ENCODE measurements at regions of chr14 and their contacts with region 1.

Region 1: DNA sequence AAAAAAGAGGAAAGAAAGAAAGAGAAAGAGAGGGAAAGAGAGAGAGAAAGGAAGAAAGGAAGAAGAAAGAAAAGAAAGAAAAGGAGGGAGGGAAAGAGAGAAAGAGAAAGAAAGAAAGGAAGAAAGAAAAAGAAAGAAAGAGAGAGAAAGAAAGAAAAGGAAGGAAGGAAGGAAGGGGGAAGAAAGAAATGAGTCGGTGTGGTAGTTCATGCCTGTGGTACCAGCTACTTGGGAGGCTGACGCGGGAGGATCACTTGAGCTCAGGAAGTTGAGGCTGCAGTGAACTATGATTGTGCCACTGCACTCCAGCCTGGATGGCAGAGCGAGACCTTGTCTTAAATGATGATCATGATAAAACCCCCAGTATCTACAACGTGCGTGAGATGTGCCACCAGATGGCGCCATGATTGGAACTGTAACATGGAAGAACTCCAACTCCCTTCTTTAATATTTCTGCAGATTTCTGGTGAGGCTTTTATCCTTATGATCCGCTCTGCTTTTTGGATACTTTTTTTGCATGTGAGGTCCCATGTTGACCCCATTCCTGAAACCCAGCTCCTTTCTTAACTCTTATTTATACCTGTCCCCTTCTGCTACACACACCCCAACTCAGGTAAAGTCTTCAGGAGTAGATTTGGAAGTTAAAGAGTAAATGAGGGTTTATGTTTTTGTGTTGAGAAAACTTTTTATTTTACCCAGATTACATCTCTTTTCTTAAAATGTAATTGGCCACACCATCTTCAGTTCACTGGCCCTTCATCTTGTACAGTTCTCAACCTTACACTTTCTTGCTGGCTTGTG is 25.6 kb downstream of the RNASE10 start:
- DNase-seq: peak; percentile 87
- ATAC-seq: peak; percentile 89
- H3K4me3 Mint-ChIP-seq: peak overlapping the region; percentile 32
- H3K27ac Mint-ChIP-seq: no peak overlapping the region
- H3K4me1 Mint-ChIP-seq: peaks cover 7% of the 10 kb centered on the region
- H3K27me3 Mint-ChIP-seq: peaks cover 9% of the 10 kb centered on the region

Region 2: GRCh38 chr14:20327005-20327869 is 203.7 kb before region 1 on chr14:
- CTCF ChIA-PET with region 1: interaction called, 11 read pairs
- POLR2A ChIA-PET with region 1: no interaction called
- intact Hi-C with region 1: loop called in 1 of 2 experiments (anchors 1 kb)
- DNase-seq: no peak
- ATAC-seq: peak; percentile 71
- H3K4me3 Mint-ChIP-seq: no peak overlapping the region
- H3K27ac Mint-ChIP-seq: peak overlapping the region; percentile 44
- H3K4me1 Mint-ChIP-seq: peaks cover 37% of the 10 kb centered on the region
- H3K27me3 Mint-ChIP-seq: no peaks in the 10 kb centered on the region

Region 3: DNA sequence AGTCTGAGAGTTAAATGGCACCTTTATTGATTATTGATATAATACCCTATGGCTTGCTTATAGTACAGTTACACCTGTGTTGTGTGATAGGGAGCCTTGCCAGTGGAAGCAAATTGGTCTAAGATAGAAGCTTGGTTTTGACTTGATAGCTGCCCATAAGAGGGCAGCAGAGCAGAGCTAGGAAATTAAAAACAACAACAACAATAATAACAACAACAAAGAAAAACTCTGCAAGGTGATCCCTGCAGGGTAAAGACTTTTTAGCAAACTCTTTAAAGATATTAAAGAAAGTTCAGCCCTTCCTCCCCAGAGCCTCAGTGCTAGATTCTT is 43.6 kb before region 1 on chr14:
- CTCF ChIA-PET with region 1: no interaction called
- POLR2A ChIA-PET with region 1: no interaction called
- intact Hi-C with region 1: no loop called
- DNase-seq: no peak
- ATAC-seq: no peak
- H3K4me3 Mint-ChIP-seq: no peak overlapping the region
- H3K27ac Mint-ChIP-seq: no peak overlapping the region
- H3K4me1 Mint-ChIP-seq: peaks cover 66% of the 10 kb centered on the region
- H3K27me3 Mint-ChIP-seq: no peaks in the 10 kb centered on the region

Region 4: GRCh38 chr14:20546877-20547276 is 15.9 kb after region 1 on chr14:
- CTCF ChIA-PET with region 1: interaction called, 17 read pairs
- POLR2A ChIA-PET with region 1: no interaction called
- intact Hi-C with region 1: no loop called
- DNase-seq: no peak
- ATAC-seq: no peak
- H3K4me3 Mint-ChIP-seq: no peak overlapping the region
- H3K27ac Mint-ChIP-seq: no peak overlapping the region
- H3K4me1 Mint-ChIP-seq: no peaks in the 10 kb centered on the region
- H3K27me3 Mint-ChIP-seq: peaks cover 4% of the 10 kb centered on the region